Activated CD4-positive, alpha-beta T cell treated with anti-CD3 and anti-CD28 coated beads, Interleukin-2, amount 10 ng/mL, durations not matched to agents 24 days and 14 days (primary cell): ENCODE measurements at regions of chr10 and their contacts with region 1.

Region 1: GRCh38 chr10:69222157-69223027 is 2.3 kb downstream of the HKDC1 start:
- DNase-seq: peak; percentile 94
- H3K4me3 Mint-ChIP-seq: peak overlapping the region; percentile 82
- H3K27ac Mint-ChIP-seq: peak overlapping the region; percentile 95
- H3K4me1 Mint-ChIP-seq: peaks cover 41% of the 10 kb centered on the region
- H3K27me3 Mint-ChIP-seq: no peaks in the 10 kb centered on the region

Region 2: DNA sequence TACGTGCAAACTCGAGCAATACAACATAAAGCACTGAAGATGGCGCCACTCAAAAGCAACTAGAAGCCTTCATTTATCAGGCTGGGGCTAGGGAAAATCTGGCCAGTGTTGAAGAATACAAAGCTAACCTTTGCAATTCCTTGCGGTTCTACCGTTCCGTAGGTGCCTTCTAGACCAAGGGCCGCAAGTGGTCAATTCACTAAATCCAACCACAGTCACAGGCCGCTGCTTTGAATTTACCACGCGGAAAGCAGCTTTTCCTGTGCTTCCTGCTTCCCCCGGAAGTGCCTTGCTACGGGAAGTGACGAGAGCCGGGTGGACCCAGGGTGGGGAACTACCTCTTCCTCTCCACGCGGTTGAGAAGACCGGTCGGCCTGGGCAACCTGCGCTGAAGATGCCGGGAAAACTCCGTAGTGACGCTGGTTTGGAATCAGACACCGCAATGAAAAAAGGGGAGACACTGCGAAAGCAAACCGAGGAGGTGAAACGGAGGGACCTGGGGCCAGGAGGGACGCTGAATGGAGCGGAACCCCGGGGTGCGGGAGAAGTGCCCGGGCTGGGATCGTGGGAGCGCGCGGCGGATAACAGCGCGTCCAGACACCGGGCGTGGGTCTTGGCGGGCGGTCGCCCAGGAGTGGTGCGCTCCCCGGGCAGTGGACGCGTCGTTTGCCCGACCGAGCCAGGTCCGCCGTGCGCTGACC is 266.4 kb before region 1 on chr10 and contains the start of gene DDX21:
- intact Hi-C with region 1: loop called (anchors 2 kb)
- DNase-seq: peak; percentile 97
- H3K4me3 Mint-ChIP-seq: peak within 1 kb of the TSS; percentile 93
- H3K27ac Mint-ChIP-seq: peak within 1 kb of the TSS; percentile 99
- H3K4me1 Mint-ChIP-seq: peaks cover 26% of the 10 kb centered on the region
- H3K27me3 Mint-ChIP-seq: no peaks in the 10 kb centered on the region
- total RNA-seq, gene DDX21: 284 and 286 TPM in 2 replicates

Region 3: GRCh38 chr10:69045441-69046300 is 176.7 kb before region 1 on chr10:
- intact Hi-C with region 1: loop called (anchors 5 kb)
- DNase-seq: peak; percentile 83
- H3K4me3 Mint-ChIP-seq: peak overlapping the region; percentile 73
- H3K27ac Mint-ChIP-seq: peak overlapping the region; percentile 99
- H3K4me1 Mint-ChIP-seq: peaks cover 43% of the 10 kb centered on the region
- H3K27me3 Mint-ChIP-seq: no peaks in the 10 kb centered on the region

Region 4: DNA sequence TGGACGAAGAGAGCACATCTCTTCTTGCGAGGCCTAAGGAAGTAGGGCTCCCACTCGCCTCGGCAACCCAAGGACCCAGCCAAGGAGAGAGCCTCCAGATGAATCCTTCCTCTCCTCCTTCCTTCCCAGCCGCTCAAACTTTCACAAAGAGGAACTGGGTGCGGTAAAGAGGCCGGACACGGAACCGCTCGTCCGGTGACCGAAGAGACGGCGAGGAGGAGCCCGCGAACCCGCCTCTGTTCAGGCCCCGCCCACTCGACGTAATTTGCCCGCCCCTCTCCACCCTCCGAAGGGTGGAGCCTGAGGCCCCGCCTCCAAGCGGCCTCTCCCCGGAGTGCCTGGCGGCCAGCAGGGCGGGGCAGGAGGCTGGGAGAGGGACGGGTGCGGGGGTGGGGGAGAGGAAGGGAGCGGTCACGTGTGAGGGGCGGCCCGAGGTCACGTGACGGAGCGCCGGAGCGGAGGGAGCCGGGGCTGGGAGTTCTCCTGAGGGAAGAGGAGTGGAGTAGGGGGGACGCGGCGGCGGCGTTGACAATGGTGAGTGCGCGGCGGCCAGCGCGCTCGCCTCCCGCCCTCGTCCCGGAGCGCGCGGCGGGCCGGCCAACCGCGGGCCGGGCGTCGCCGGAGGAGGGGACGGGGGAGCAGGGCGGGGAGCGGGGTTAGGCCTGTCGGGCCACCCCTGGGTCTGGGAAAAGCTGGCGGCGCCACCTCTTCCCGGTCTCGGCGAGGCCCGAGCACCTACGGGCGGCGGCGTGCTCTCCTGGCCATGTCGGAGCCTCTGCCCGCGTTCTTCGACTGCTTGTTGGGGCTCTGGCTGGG is 98.4 kb before region 1 on chr10 and contains the start of gene VPS26A:
- intact Hi-C with region 1: loop called (anchors 1 kb)
- DNase-seq: peak; percentile 100
- H3K4me3 Mint-ChIP-seq: peak within 1 kb of the TSS; percentile 96
- H3K27ac Mint-ChIP-seq: peak within 1 kb of the TSS; percentile 94
- H3K4me1 Mint-ChIP-seq: peaks cover 22% of the 10 kb centered on the region
- H3K27me3 Mint-ChIP-seq: peaks cover 3% of the 10 kb centered on the region
- total RNA-seq, gene VPS26A: 29.2 and 30.8 TPM in 2 replicates

Region 5: GRCh38 chr10:69202332-69202731 is 20.1 kb before region 1 on chr10:
- intact Hi-C with region 1: loop called (anchors 1 kb)
- DNase-seq: peak; percentile 77
- H3K4me3 Mint-ChIP-seq: peak overlapping the region; percentile 62
- H3K27ac Mint-ChIP-seq: peak overlapping the region; percentile 66
- H3K4me1 Mint-ChIP-seq: peaks cover 43% of the 10 kb centered on the region
- H3K27me3 Mint-ChIP-seq: no peaks in the 10 kb centered on the region

Region 6: GRCh38 chr10:69237528-69238159 is 15.3 kb after region 1 on chr10:
- intact Hi-C with region 1: no loop called
- DNase-seq: peak; percentile 96
- H3K4me3 Mint-ChIP-seq: no peak overlapping the region
- H3K27ac Mint-ChIP-seq: no peak overlapping the region
- H3K4me1 Mint-ChIP-seq: peaks cover 20% of the 10 kb centered on the region
- H3K27me3 Mint-ChIP-seq: no peaks in the 10 kb centered on the region

Region 7: DNA sequence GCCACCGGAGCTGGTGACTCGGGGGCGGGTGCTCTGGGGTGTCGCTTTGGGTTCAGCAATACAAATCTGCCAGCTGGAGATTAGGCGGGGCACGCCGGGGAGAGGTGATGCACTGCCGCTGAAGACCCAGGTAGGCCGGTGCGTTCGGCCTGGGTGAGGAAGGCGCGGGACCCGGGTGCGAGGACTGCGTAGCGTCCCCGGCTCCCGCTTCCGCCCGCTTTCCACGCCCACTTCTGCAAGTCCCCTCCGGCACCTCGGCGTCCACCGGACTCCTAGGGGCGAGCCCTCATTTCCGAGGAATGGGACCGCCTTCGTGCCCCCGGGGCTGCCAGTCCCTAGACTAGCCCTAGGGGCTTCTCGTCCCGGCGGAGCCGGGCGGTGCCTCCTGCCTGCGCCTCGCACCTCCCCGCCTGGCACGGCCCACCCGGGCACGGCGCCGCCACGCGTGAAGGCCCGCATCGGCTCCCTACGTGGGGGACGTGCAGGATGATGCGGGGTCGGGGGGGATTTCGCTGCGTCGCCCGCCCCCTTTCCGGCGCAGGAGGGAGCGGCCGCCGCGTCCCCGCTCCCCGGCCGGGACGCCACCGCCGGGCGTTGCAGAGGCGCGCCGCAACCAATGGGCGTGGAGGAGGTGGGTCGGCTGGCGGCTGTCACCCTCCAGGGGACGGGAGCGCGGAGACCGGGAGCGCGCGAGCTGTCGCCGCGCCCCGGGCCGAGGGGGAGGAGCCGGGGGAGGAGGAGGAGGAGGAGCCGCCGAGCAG is 95.9 kb after region 1 on chr10:
- intact Hi-C with region 1: loop called (anchors 2 kb)
- DNase-seq: peak; percentile 98
- H3K4me3 Mint-ChIP-seq: peak overlapping the region; percentile 98
- H3K27ac Mint-ChIP-seq: peak overlapping the region; percentile 98
- H3K4me1 Mint-ChIP-seq: peaks cover 30% of the 10 kb centered on the region
- H3K27me3 Mint-ChIP-seq: no peaks in the 10 kb centered on the region